GM12878 (cell line): ENCODE measurements at regions of chr7 and their contacts with region 1.

Region 1: GRCh38 chr7:107201795-107202450 is 33.1 kb downstream of the HBP1 start:
- DNase-seq: no peak
- ATAC-seq: peak; percentile 92
- H3K4me3 ChIP-seq: no peak overlapping the region
- H3K27ac ChIP-seq: no peak overlapping the region
- H3K4me1 ChIP-seq: no peaks in the 10 kb centered on the region
- H3K27me3 ChIP-seq: no peaks in the 10 kb centered on the region
- CTCF ChIP-seq: peak; percentile 38 to 60 (median 53); a peak in 5 of 6 replicates
- EP300 ChIP-seq: no peak
- POLR2A ChIP-seq: no peak
- RAD21 ChIP-seq: peak; percentile 66

Region 2: DNA sequence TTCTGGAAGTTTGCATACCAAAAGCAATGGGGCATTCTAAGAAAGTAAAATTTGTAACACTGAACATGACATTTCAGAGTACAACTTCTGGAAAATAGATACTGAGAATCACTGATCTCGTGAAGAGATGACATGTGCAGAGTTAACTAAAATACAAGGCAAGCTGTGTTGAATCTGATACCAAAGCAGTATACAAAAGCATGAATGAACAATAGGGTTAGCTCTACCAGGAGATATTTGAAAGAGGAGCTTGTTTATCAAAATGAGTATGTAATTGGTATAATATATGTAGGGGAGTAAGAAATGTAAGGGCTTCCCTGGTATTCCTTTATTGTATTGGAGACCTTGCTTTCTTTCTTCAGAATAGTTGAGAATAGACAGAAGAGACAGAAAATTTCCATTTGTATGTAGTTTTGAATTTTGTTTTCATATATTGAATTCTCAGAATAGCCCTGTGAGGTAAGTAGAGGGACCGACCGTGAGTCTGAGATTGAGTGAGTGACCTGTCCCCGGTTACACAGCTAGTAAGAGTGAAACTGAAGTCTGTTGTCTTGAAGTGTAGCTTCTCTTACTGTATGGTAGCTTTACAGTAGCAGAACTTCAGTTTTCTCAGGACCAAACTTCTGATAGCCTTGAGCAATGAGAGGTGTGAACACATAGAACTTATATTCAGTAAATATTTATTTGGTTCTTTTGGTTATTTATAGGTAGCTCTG is 28.1 kb before region 1 on chr7:
- CTCF ChIA-PET with region 1: interaction called, 7 read pairs
- POLR2A ChIA-PET with region 1: interaction called, 3 read pairs
- RAD21 ChIA-PET with region 1: interaction called, 9 read pairs
- SMC1A ChIA-PET with region 1: interaction called, 13 read pairs
- in situ Hi-C with region 1: no loop called
- intact Hi-C with region 1: no loop called
- DNase-seq: no peak
- ATAC-seq: peak; percentile 68
- H3K4me3 ChIP-seq: no peak overlapping the region
- H3K27ac ChIP-seq: peak overlapping the region; percentile 15; the same call in 1 of the 2 replicates
- H3K4me1 ChIP-seq: peaks cover 26% of the 10 kb centered on the region
- H3K27me3 ChIP-seq: no peaks in the 10 kb centered on the region
- CTCF ChIP-seq: no peak
- EP300 ChIP-seq: no peak
- POLR2A ChIP-seq: no peak
- RAD21 ChIP-seq: no peak

Region 3: DNA sequence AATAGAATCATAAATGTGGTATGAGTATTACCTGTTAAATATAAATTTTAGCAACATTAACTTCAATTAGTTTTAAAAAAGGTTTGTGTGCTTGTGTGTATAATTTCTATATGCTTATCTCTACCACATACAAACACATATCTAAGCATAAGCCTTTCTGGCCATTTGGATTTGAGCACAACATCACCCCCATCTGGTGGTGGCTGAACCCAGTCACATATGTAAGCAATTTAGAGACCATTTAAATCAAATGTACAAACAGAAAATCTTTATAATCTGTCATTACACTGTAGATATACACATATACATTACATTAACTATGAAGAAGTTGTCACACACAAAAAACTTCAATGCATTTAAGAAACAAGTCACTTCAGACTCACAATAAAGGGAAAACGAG is 299.7 kb after region 1 on chr7:
- CTCF ChIA-PET with region 1: interaction called, 21 read pairs
- POLR2A ChIA-PET with region 1: no interaction called
- RAD21 ChIA-PET with region 1: interaction called, 3 read pairs
- SMC1A ChIA-PET with region 1: interaction called, 7 read pairs
- in situ Hi-C with region 1: no loop called
- intact Hi-C with region 1: loop called (anchors 1 kb)
- DNase-seq: no peak
- ATAC-seq: peak; percentile 76
- H3K4me3 ChIP-seq: no peak overlapping the region
- H3K27ac ChIP-seq: no peak overlapping the region
- H3K4me1 ChIP-seq: no peaks in the 10 kb centered on the region
- H3K27me3 ChIP-seq: no peaks in the 10 kb centered on the region
- CTCF ChIP-seq: peak; percentile 36 to 62 (median 49); a peak in 4 of 6 replicates
- EP300 ChIP-seq: no peak
- POLR2A ChIP-seq: no peak
- RAD21 ChIP-seq: peak; percentile 71